BJ (cell line): ENCODE measurements at regions of chr19 and their contacts with region 1.

Region 1: DNA sequence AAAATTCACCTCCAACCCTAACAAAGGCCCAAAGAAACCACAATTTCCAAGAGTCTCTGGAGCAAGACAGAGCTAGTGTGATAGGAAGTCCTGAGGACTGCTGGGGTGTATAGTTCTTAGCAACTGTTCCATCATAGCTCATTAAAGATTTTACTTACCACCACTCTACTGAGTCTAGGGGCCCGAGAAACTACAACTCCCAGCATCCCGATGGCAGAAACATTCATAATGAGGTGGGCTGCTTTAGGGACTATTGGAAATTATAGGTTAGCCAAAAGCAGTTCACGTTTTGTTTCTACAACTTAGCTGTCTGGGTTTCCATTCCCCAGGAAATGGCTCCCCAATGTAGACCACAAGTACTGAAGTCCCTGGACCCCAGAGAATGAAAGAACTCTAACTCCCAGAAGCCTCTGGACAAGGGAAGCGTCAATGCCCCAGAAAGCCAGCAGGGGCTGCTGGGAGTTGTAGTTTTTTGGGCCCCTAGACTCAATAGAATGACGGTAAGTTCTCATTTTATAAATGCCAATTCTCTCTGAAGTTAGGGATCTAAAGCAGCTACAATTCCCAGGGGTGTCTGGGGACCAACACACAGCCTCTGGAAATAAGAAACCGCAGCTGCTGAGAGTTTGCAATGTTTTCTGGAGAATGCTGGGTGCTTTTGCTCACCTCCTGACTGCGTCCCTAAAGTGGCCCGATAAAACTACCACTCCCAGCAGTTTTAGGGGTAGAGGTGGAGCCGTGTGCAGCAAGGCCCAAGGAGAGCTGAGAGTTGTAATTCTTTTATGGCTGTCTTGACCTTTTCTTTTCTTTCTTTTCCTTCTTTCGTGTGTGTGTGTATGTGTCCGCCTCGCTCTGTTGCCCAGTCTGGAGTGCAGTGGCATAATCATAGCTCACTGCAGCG is 11.1 kb downstream of the FTL start:
- DNase-seq: no peak
- H3K4me3 ChIP-seq: no peak overlapping the region
- H3K27me3 ChIP-seq: no peaks in the 10 kb centered on the region
- CTCF ChIP-seq: peak; percentile 17; the same call in 1 of the 2 replicates

Region 2: DNA sequence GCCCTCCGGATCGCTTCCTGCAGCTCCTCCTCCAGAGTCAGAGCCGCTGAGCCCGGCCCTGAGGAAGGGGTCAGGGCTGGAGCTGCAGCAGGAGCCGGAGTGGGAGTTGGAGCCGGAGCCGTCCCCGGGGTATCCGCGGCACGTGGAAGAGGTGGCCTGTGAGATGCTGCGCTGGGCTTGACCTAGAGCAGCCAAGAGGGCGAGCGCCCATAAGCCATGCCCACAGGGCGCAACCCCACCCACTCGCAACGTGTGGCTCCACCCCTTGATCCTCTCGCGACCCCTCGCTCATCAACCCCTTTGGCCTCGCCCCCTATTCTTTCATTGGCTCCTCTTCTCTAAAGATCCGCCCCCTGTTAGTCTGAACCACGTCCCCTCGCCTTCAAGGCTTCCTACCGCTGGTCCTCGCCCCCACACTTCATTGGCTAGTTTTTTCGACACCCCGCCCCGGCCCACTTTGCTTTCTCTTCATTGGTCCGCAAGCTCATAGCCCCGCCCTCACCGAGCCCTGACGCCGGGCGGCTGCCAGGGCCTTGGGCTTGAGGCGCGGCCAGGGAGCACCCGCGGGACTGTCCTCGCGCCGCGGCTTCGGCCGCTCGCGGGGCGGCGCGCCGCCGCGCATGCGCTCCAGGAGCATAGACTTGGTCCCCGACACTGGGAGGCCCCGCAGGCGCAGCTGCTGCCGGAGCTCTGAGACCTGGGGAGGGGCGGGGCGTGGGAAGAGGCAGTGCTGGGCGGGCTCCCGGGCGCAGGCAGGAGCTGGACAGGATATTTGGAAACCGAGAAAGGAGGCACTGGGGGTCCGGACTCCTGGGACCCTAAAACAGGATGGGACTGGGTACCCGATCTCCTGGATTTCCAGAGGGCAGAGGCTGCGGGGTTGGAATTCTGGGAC is 262.1 kb before region 1 on chr19:
- CTCF ChIA-PET with region 1: no interaction called
- POLR2A ChIA-PET with region 1: interaction called, 23 read pairs
- DNase-seq: peak; percentile 98
- H3K4me3 ChIP-seq: peak overlapping the region; percentile 70
- H3K27me3 ChIP-seq: no peaks in the 10 kb centered on the region
- CTCF ChIP-seq: no peak

Region 3: DNA sequence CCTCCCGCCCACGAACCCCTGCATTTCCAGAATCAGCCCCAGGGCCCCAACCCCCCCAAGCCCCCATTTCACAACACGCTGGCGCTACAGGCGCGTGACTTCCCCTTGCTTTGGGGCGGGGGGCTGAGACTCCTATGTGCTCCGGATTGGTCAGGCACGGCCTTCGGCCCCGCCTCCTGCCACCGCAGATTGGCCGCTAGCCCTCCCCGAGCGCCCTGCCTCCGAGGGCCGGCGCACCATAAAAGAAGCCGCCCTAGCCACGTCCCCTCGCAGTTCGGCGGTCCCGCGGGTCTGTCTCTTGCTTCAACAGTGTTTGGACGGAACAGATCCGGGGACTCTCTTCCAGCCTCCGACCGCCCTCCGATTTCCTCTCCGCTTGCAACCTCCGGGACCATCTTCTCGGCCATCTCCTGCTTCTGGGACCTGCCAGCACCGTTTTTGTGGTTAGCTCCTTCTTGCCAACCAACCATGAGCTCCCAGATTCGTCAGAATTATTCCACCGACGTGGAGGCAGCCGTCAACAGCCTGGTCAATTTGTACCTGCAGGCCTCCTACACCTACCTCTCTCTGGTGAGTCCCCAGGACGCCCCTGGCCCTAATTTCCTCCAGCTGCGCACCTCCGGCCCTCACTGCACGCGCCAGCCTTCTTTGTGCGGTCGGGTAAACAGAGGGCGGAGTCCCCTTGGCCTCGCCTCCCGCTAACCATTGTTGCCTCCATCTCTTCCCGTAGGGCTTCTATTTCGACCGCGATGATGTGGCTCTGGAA is 11.0 kb before region 1 on chr19 and contains the start of gene FTL:
- CTCF ChIA-PET with region 1: interaction called, 24 read pairs
- POLR2A ChIA-PET with region 1: interaction called, 8 read pairs
- DNase-seq: peak; percentile 75
- H3K4me3 ChIP-seq: peak within 1 kb of the TSS; percentile 78
- H3K27me3 ChIP-seq: no peaks in the 10 kb centered on the region
- CTCF ChIP-seq: no peak
- polyA plus RNA-seq, gene FTL: 2,664 and 3,340 TPM in 2 replicates